GM12878 (cell line): ENCODE measurements at regions of chr12 and their contacts with region 1.

Region 1: DNA sequence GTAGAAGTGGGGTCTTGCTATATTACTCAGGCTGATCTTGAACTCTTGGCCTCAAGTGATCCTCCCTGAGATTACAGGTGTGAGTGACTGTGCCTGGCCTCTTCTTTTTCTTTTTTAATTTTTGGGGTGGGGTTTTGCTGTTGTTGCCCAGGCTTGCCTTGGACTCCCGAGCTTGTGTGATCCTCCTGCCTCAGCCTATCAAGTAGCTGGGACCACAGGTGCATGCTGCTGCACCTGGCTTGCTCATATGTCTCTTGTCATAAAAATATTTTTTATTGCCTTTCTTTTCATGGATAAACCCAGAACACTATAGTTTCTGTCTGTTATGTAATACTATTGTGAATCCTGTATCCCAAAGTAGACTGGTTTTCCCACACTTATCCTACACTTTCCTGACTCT is 26.0 kb downstream of the SCYL2 start:
- DNase-seq: no peak
- ATAC-seq: no peak
- H3K4me3 ChIP-seq: no peak overlapping the region
- H3K27ac ChIP-seq: no peak overlapping the region
- H3K4me1 ChIP-seq: no peaks in the 10 kb centered on the region
- H3K27me3 ChIP-seq: no peaks in the 10 kb centered on the region
- CTCF ChIP-seq: no peak
- EP300 ChIP-seq: no peak
- POLR2A ChIP-seq: no peak
- RAD21 ChIP-seq: no peak

Region 2: DNA sequence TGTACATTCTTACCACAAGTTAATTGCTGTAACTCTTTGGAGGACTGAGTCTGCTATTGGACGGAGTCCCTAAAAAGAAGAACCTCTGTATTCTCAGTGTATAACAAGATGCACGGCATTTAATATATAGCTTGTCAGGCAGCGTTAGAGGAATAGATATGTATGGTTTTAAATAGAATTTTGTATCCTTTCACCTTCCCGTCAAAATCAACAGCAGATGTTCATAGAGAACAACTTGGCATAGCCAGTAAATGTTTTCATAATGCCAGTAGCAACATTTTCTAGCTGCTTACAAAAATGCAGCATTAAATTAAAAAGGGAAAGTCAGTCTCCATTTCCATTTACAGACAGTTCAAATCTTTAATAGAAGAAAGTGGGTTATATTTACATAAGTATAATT is 19.2 kb before region 1 on chr12:
- CTCF ChIA-PET with region 1: interaction called, 3 read pairs
- POLR2A ChIA-PET with region 1: no interaction called
- RAD21 ChIA-PET with region 1: no interaction called
- SMC1A ChIA-PET with region 1: interaction called, 10 read pairs
- in situ Hi-C with region 1: no loop called
- intact Hi-C with region 1: no loop called
- DNase-seq: no peak
- ATAC-seq: no peak
- H3K4me3 ChIP-seq: no peak overlapping the region
- H3K27ac ChIP-seq: no peak overlapping the region
- H3K4me1 ChIP-seq: no peaks in the 10 kb centered on the region
- H3K27me3 ChIP-seq: no peaks in the 10 kb centered on the region
- CTCF ChIP-seq: no peak
- EP300 ChIP-seq: no peak
- POLR2A ChIP-seq: no peak
- RAD21 ChIP-seq: no peak